SK-N-SH (cell line): ENCODE measurements at regions of chr2 and their contacts with region 1.

Region 1: GRCh38 chr2:149597668-149598326 is 10.2 kb upstream of the MMADHC start:
- DNase-seq: peak; percentile 50
- H3K4me3 ChIP-seq: peak overlapping the region; percentile 30 to 31; a peak in 3 of 4 replicates
- H3K27ac ChIP-seq: peak overlapping the region; percentile 48 to 53; a peak in 3 of 4 replicates
- H3K4me1 ChIP-seq: peaks cover 0 to 6% of the 10 kb centered on the region in 2 experiments; a peak in 2 of 4 replicates
- H3K27me3 ChIP-seq: no peaks in the 10 kb centered on the region
- CTCF ChIP-seq: peak; percentile 84
- EP300 ChIP-seq: peak in 1 of 2 experiments; percentile 56; a peak in 2 of 4 replicates
- RAD21 ChIP-seq: peak; percentile 96

Region 2: GRCh38 chr2:149612091-149612490 is 14.3 kb after region 1 on chr2:
- CTCF ChIA-PET with region 1: interaction called, 14 read pairs
- POLR2A ChIA-PET with region 1: no interaction called
- DNase-seq: no peak
- H3K4me3 ChIP-seq: no peak overlapping the region
- H3K27ac ChIP-seq: peak overlapping the region in 1 of 2 experiments; percentile 53; a peak in 2 of 4 replicates
- H3K4me1 ChIP-seq: peaks cover 13 to 14% of the 10 kb centered on the region in 2 experiments
- H3K27me3 ChIP-seq: no peaks in the 10 kb centered on the region
- CTCF ChIP-seq: no peak
- EP300 ChIP-seq: peak in 1 of 2 experiments; percentile 57; a peak in 1 of 4 replicates
- RAD21 ChIP-seq: no peak

Region 3: DNA sequence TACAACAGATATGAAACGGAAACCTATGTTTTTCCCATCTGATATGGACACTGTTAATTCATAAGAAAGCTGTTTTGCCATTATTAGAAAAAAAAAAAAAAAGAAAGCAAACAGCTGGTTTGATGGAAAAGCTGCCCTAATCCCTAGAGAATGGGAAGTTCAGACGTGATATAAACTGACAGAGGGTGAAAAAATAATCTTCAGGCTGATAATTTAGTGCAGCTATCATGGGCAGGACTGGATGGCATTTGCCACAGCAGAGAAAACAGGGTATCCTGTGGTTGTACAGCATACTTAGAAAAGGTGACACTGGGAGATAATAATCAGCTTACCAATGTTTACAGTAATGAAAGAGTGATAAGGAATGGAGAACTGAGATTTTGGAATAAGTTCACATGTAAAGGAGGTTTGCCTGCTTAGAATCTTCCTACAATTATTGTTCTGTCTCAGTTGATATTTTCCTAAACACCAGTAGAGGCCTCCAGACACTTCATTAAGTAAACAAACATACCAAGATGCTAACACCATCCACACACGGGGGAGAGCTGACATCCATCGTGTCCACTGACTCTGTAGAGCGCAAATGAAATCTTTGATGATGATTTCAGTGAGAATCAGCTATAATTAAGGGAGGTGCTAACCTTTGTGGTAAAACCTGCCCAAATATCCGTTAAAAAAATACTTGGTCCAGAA is 201.4 kb after region 1 on chr2:
- CTCF ChIA-PET with region 1: interaction called, 10 read pairs
- POLR2A ChIA-PET with region 1: no interaction called
- DNase-seq: peak; percentile 23
- H3K4me3 ChIP-seq: no peak overlapping the region
- H3K27ac ChIP-seq: no peak overlapping the region
- H3K4me1 ChIP-seq: peaks cover 0 to 6% of the 10 kb centered on the region in 2 experiments; a peak in 2 of 4 replicates
- H3K27me3 ChIP-seq: no peaks in the 10 kb centered on the region
- CTCF ChIP-seq: no peak
- EP300 ChIP-seq: no peak
- RAD21 ChIP-seq: peak; percentile 83

Region 4: DNA sequence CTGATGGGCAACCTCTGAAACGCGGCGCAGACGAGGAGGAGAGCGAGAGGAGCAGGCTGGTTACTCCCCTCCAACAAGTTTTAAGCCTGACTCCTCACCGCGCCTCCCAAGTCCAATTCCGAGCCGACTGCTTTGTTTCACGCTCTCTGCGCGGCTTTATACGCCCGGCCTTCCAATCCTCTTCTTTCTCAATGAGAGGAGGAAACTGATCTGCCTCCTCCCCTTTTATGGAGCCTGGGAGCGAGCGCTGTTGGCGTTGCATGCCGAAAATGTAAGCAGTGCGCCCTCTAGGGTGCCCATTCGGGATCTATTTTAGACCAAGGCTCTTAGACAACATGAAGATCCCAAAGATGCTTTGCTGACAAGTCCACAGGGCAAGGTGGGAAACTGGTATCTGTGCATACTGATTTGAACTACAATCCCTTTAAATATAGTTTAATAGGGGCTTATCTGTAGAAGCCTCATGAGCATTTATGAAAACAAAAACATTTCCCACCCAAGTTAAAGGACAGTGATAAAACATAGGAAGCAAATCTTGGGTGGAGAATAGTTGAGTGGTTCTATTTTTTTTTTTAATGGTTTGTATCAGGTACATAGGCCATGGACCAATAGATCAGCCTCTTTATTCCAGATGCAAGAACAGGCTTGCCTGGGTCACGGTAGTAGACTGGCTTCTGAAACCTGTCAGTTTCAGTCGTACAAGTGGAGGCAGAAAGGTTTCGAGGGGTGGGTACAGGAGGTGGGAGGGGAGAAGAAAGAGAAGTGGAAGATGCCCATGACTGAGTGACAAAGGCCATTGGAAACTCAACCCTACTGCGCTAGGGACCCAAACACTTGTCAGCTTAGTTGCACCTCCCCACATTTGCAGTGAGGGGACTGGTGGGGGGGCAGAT is 890.0 kb after region 1 on chr2 and contains the start of gene RND3:
- CTCF ChIA-PET with region 1: interaction called, 16 read pairs
- POLR2A ChIA-PET with region 1: no interaction called
- DNase-seq: peak; percentile 86
- H3K4me3 ChIP-seq: peak within 1 kb of the TSS; percentile 90 to 98
- H3K27ac ChIP-seq: peak within 1 kb of the TSS; percentile 90 to 92
- H3K4me1 ChIP-seq: peaks cover 17 to 27% of the 10 kb centered on the region in 2 experiments; a peak in 3 of 4 replicates
- H3K27me3 ChIP-seq: no peaks in the 10 kb centered on the region
- CTCF ChIP-seq: peak; percentile 92
- EP300 ChIP-seq: peak in 1 of 2 experiments; percentile 49; a peak in 2 of 4 replicates
- RAD21 ChIP-seq: peak; percentile 90
- polyA plus RNA-seq, gene RND3: 49.7 and 56.7 TPM in 2 replicates